ENCODE measurements at regions of chr9 and their contacts with region 1.

Region 1: DNA sequence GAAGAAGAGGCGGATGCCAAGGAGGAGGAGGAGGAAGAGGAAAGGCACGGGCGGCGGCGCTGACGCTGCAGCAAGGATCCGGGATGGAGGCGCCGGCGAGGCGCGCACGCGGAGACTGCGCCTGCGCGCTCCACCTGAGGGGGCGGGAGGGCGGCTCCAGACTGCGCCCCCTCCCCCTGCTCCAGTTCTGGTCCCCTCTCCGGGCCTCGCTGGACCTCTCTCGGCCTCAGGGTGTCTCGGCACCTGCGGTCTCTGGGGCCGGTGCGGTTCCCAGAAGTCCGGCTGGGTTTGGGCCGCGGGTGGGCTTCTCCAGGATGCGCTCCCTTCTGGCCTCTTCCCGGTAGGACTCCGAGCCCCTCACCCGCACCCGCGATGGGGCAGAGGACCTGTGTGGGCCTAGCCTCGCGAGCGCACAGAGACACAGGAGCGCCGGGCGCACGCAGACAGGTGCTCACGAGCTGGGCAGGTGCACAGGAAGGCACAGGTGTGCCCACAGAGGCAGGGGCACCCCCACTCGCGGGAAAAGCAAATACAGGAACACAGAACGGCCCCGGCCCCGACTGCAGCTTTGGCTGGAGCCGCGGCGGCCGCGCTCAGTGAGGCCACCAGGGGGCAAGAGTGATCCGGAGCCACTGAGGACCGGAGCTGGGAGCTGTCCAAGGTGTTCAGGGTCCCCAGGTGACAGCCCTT is at the start of gene NPDC1:
- DNase-seq: peak; percentile 92
- ATAC-seq: peak; percentile 65
- H3K4me3 Mint-ChIP-seq: peak within 1 kb of the TSS; percentile 61
- H3K27ac Mint-ChIP-seq: no peak within 1 kb of the TSS
- H3K4me1 Mint-ChIP-seq: peaks cover 12% of the 10 kb centered on the region
- H3K27me3 Mint-ChIP-seq: peaks cover 34% of the 10 kb centered on the region
- total RNA-seq, gene NPDC1: 21.0 to 23.1 TPM

Region 2: DNA sequence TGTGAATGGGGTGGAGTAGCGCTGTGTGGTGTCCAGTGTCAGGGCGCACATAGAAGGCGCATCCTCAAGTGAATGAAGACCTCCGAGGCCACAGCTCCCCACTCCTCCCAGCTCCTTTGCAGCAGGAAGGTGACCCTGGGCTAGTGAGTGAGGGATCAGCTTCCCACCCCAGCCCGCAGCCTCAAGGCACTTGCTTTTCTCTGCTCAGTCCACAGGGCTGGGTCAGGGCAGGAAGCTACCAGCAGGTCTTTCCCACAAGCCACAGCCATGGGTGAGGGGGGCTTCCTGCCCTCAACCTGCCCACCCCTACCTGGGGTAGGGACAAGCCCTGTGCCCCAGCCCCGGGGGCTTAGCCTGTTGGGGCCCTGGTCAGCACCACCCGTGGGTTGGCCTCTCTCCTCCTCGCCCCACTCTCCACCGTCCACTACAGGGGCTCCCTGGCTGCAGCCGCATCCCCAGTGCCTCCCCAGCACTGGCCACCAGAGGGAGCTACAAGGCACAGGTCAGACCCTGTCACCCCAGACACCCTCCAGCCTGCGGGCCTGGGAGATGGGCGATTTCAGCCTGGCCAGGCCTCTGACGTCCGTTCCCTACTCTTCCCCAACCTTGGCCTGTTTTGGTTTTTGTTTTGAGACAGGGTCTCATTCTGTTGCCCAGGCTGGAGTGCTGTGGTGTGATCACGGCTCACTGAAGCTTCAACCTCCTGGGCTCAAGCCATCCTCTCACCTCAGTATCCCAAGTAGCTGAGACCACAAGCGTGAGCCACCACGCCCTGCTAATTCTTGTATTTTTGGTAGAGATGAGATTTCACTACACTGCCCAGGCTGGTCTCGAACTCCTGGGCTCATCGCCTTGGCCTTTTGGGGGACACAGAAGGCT is 16.9 kb before region 1 on chr9:
- CTCF ChIA-PET with region 1: interaction called, 20 read pairs
- POLR2A ChIA-PET with region 1: interaction called, 3 read pairs
- intact Hi-C with region 1: loop called in 1 of 2 experiments (anchors 1 kb)
- DNase-seq: peak; percentile 88
- ATAC-seq: peak; percentile 52
- H3K4me3 Mint-ChIP-seq: peak overlapping the region; percentile 60
- H3K27ac Mint-ChIP-seq: peak overlapping the region; percentile 42
- H3K4me1 Mint-ChIP-seq: peaks cover 46% of the 10 kb centered on the region
- H3K27me3 Mint-ChIP-seq: no peaks in the 10 kb centered on the region

Region 3: GRCh38 chr9:137064027-137064879 is 18.0 kb after region 1 on chr9:
- CTCF ChIA-PET with region 1: interaction called, 43 read pairs
- POLR2A ChIA-PET with region 1: no interaction called
- intact Hi-C with region 1: loop called (anchors 1 to 2 kb)
- DNase-seq: peak; percentile 79
- ATAC-seq: no peak
- H3K4me3 Mint-ChIP-seq: no peak overlapping the region
- H3K27ac Mint-ChIP-seq: no peak overlapping the region
- H3K4me1 Mint-ChIP-seq: peaks cover 5% of the 10 kb centered on the region
- H3K27me3 Mint-ChIP-seq: no peaks in the 10 kb centered on the region

Region 4: DNA sequence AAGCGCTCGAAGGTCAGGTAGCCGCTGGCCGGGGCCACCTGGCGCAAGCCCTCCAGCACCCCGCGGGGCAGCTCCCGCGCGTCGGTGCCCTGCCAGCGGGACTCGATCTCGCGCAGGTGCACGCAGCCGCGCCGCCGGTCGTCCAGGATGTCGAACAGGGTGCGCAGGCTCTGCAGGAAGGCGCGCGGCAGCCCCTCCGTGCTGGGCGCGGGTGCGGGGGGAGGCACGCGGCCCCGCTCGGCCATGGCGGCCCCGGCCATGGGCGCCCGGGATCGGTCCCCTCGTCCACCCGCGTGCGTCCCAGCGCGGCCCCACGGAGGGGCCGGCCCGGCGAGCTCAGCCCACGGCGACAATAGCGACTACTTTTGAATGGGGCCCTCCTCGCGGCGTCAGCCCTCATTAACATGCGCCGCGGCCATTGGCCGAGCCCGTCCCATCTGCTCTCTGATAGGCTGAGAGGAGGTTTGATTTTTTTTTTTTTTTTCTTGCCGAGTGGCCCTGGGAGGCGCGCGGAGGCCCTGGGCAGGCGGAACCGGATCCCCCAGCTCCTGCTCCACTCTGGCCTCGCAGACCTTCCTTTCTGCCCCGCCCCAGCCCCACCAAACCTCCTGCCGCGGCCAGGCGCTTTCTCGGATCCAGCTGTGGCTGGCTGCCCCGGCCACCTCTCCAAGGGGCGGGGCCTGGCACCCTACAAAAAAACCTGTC is 24.1 kb after region 1 on chr9 and contains the start of gene SAPCD2:
- CTCF ChIA-PET with region 1: interaction called, 43 read pairs
- POLR2A ChIA-PET with region 1: no interaction called
- intact Hi-C with region 1: loop called (anchors 1 to 2 kb)
- DNase-seq: peak; percentile 92
- ATAC-seq: peak; percentile 91
- H3K4me3 Mint-ChIP-seq: peak within 1 kb of the TSS; percentile 71
- H3K27ac Mint-ChIP-seq: peak within 1 kb of the TSS; percentile 71
- H3K4me1 Mint-ChIP-seq: peaks cover 9% of the 10 kb centered on the region
- H3K27me3 Mint-ChIP-seq: no peaks in the 10 kb centered on the region
- total RNA-seq, gene SAPCD2: 6.4 to 8.8 TPM

Region 5: GRCh38 chr9:137095664-137096517 is 49.6 kb after region 1 on chr9:
- CTCF ChIA-PET with region 1: interaction called, 12 read pairs
- POLR2A ChIA-PET with region 1: interaction called, 4 read pairs
- intact Hi-C with region 1: no loop called
- DNase-seq: peak; percentile 94
- ATAC-seq: peak; percentile 98
- H3K4me3 Mint-ChIP-seq: peak overlapping the region; percentile 70
- H3K27ac Mint-ChIP-seq: peak overlapping the region; percentile 91
- H3K4me1 Mint-ChIP-seq: peaks cover 17% of the 10 kb centered on the region
- H3K27me3 Mint-ChIP-seq: no peaks in the 10 kb centered on the region